AG04450 (cell line): ENCODE measurements at regions of chr1 and their contacts with region 1.

Region 1: DNA sequence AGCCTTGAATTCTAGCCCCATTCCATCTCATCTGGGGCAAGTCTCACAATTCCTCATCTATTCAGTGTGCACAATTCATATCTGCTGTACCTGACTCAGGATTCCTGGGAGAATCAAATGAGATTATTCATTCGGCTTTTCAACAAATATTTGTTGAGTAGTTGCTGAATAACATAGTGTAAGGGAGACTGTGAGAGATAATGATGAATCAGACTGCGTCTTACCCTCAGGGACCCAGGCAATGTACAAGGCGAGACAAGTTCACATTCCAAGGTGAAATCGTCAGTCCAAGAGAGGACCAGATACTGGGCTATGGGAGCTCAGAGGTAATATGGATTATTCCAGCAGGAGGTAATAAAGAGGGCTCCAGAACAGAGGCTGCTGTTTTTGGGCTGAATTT is 67.8 kb upstream of the SMYD2 start:
- DNase-seq: no peak
- H3K4me3 ChIP-seq: no peak overlapping the region
- H3K27ac ChIP-seq: no peak overlapping the region
- H3K27me3 ChIP-seq: peaks cover 15% of the 10 kb centered on the region
- CTCF ChIP-seq: no peak

Region 2: GRCh38 chr1:214146523-214146922 is 66.6 kb before region 1 on chr1:
- CTCF ChIA-PET with region 1: no interaction called
- POLR2A ChIA-PET with region 1: no interaction called
- DNase-seq: no peak
- H3K4me3 ChIP-seq: no peak overlapping the region
- H3K27ac ChIP-seq: no peak overlapping the region
- H3K27me3 ChIP-seq: no peaks in the 10 kb centered on the region
- CTCF ChIP-seq: no peak

Region 3: DNA sequence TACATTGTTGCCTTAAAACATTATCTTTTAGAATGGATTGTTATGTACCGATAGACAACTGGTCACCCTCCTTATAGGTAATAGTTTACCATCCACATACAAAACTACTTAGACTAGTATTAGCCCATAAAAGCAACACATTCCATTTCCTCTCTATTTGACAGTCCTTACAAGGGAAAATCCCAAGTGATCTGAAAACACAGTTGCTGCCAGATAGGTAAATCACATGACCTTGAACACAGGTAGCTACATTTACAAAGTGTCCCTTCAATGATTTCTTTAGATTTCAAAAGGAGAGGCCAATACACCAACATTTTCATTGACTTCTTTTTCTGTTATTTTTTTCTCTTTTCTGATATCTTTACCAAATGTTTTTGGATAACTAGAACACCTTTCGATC is 35.0 kb before region 1 on chr1:
- CTCF ChIA-PET with region 1: no interaction called
- POLR2A ChIA-PET with region 1: no interaction called
- DNase-seq: no peak
- H3K4me3 ChIP-seq: no peak overlapping the region
- H3K27ac ChIP-seq: no peak overlapping the region
- H3K27me3 ChIP-seq: no peaks in the 10 kb centered on the region
- CTCF ChIP-seq: no peak

Region 4: DNA sequence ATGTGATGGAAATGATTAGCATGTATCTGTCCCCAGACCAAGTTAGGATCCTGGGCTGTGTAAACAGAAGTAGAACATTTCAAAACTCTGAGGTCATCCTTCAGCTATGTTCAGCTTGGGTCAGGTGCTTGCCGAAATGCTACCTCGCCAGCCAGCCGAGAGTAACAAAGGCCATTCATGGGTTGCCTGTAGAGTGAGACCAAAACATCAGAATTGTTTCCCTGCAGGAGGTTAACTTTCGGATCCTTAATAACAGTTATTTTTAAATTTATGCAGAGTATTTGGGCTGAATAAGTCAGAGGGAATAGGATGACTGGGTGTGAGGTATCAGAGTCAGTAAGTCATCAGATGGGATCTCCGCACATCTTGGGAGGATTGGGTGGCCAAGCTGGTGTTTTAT is 103.5 kb after region 1 on chr1:
- CTCF ChIA-PET with region 1: interaction called, 17 read pairs
- POLR2A ChIA-PET with region 1: no interaction called
- DNase-seq: no peak
- H3K4me3 ChIP-seq: no peak overlapping the region
- H3K27ac ChIP-seq: no peak overlapping the region
- H3K27me3 ChIP-seq: no peaks in the 10 kb centered on the region
- CTCF ChIP-seq: no peak